ENCODE measurements at regions of chr10 and their contacts with region 1.

Region 1: DNA sequence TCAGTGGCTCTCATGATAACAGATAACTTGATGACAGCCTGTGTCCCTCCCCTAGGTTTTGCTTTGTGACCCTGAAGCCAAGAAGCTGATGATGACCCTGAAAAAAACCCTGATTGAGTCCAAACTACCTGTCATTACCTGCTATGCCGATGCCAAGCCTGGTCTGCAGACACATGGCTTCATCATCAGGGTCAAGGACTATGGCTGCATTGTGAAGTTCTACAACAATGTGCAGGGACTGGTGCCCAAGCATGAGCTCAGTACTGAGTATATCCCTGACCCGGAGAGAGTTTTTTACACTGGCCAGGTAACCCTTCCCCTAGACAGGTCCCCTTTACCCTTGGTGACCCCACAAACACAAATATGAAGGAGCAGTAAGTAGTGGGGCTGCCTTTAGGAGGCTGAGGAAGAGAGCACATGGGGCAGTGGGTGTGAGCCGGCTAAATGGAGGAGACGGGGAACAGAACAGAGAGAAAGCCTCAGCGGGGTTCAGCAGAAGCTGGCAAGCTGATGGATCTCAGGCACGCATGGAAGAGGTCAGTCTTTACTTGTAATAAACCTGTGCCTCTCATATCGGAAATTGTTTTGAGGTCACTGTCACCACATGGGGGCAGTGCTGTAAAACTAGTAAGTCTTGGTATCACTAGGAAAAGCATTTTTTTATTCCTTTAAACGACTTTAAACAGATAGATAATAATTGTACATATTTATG is 20.2 kb downstream of the PDCD11 start:
- DNase-seq: no peak
- H3K4me3 ChIP-seq: no peak overlapping the region
- H3K27ac ChIP-seq: no peak overlapping the region
- H3K4me1 ChIP-seq: no peaks in the 10 kb centered on the region
- H3K27me3 ChIP-seq: no peaks in the 10 kb centered on the region
- CTCF ChIP-seq: peak; percentile 60 to 68 (median 66)
- EP300 ChIP-seq: no peak
- POLR2A ChIP-seq: no peak

Region 2: DNA sequence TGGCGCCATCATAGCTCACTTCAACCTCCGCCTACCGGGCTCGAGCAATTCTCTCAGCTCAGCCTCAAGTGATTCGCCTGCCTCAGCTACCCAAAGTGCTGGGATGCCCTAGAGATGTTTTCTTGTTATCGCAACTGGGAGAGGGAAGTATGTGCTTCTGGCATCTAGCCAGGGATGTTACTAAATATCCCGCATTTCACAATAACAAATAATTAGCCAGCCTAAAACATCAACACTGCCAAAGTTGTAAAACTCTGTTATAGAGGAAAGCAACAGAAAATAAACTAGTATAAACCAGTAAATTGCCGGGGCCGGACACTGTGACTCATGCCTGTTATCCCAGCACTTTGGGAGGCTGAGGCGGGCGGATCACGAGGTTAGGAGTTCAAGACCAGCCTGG is 132.4 kb before region 1 on chr10:
- intact Hi-C with region 1: no loop called
- DNase-seq: no peak
- H3K4me3 ChIP-seq: no peak overlapping the region
- H3K27ac ChIP-seq: no peak overlapping the region
- H3K4me1 ChIP-seq: no peaks in the 10 kb centered on the region
- H3K27me3 ChIP-seq: peaks cover 0 to 76% (median 13%) of the 10 kb centered on the region in 4 donors
- CTCF ChIP-seq: no peak
- EP300 ChIP-seq: no peak
- POLR2A ChIP-seq: no peak

Region 3: DNA sequence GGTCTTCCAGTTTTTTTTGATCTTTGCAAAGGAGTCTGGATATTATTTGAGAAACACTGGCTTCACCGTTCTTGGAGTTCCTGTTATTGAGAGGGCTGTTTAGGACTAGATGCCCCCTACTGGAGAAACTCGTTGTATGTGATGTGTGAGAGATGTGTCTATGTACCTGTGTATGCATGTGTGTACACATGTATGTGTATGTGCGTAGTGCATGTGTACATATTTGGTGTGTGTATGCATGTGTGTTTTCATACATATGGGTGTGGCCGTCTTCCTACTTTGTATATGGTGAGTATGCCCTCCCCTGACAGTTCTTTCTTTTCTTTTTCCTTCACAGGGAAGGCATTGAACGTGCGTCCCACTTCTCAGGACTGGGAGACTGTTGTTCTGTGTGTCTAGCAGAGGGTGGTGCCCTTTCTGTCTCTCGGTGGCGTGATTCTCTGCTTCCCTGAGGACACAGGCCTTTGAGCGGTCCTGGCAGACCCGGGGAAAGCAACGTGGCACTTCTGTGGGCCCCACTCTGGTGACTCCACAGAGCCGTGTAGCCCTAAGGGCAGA is 65.5 kb after region 1 on chr10:
- intact Hi-C with region 1: loop called (anchors 2 kb)
- DNase-seq: no peak
- H3K4me3 ChIP-seq: no peak overlapping the region
- H3K27ac ChIP-seq: no peak overlapping the region
- H3K4me1 ChIP-seq: peaks cover 0 to 18% (median 14%) of the 10 kb centered on the region in 4 donors
- H3K27me3 ChIP-seq: no peaks in the 10 kb centered on the region
- CTCF ChIP-seq: peak; percentile 47 to 63 (median 52)
- EP300 ChIP-seq: no peak
- POLR2A ChIP-seq: no peak